ENCODE measurements at regions of chr12 and their contacts with region 1.

Region 1: DNA sequence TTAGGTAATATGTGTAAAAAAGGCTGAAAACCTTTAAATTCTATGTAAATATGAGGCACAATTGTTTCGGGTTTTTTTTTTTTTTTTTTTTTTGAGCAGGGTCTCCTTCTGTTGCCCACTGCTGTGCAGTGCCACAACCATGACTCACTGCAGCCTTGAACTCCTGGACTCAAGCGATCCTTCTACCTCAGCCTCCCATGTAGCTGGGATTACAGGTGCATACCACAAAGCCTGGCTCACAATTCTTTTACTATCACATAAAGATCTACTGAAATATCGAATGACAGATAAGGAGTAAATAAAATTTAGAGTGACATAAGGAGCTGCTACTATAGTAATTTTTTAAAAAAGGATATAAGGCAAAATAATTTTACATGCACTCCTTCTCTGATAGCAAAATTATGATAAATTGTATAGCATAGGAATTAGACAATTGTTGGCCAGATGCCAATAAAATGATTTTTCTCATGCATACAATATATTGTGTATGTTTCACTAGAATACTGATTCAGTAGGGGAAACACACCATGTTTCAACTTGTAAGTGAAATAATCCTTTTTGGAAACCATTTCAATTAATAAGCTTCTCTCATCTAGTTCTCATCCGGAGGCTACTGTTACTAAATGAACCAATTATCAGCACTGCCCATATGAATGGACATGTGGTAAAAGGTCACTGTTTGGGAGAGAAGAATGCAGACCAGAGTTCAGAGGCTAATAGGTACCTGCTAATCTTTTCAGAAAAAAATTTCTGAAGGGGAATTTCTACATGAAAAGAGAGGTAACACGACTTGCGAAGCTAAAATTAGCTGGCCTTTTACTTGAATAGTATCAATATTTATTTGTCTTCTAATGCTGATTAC is 108.4 kb downstream of the PPP1R12A start:
- DNase-seq: no peak
- ATAC-seq: no peak
- H3K4me3 ChIP-seq: no peak overlapping the region
- H3K4me3 Mint-ChIP-seq: no peak overlapping the region
- H3K27ac ChIP-seq: no peak overlapping the region
- H3K27ac Mint-ChIP-seq: no peak overlapping the region
- H3K4me1 ChIP-seq: no peaks in the 10 kb centered on the region
- H3K4me1 Mint-ChIP-seq: peaks cover 10% of the 10 kb centered on the region
- H3K27me3 ChIP-seq: no peaks in the 10 kb centered on the region
- H3K27me3 Mint-ChIP-seq: no peaks in the 10 kb centered on the region
- CTCF ChIP-seq: no peak

Region 2: DNA sequence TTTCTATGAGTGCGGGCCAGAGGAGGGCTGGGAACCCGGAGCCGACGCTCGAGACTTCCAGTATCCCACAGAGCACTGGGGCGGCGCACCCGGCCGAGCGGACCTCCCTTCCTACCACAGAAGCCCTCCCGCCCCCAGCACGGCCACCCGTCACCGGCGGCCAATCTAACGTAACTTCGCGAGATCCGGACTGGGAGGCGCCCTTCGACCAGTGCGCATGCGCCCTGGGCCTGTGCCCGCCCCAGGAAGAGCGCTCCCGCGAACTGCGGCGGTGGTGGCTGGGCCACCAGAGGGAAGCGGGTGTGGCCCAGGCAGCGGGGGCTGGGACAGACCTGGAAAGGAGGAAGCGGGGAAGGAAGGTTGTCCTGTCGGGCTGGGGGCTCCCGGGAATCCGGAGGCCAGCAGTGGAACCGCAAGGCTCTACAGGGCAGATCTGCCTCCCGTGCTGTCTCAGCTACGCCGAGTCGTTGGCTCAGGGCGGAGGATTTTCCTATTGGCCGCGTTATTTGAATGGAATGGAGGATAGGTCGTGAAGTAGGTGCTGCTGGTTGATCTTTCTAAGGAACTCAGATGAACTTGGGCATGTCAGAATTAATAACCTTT is 108.6 kb after region 1 on chr12 and contains the start of gene PPP1R12A:
- CTCF ChIA-PET with region 1: no interaction called
- POLR2A ChIA-PET with region 1: no interaction called
- intact Hi-C with region 1: loop called (anchors 10 kb)
- DNase-seq: peak; percentile 97
- ATAC-seq: peak; percentile 88
- H3K4me3 ChIP-seq: peak within 1 kb of the TSS; percentile 85 to 95 (median 92)
- H3K4me3 Mint-ChIP-seq: peak within 1 kb of the TSS; percentile 99
- H3K27ac ChIP-seq: peak within 1 kb of the TSS; percentile 92 to 93
- H3K27ac Mint-ChIP-seq: peak within 1 kb of the TSS; percentile 99
- H3K4me1 ChIP-seq: peaks cover 18 to 31% of the 10 kb centered on the region in 2 donors
- H3K4me1 Mint-ChIP-seq: peaks cover 43% of the 10 kb centered on the region
- H3K27me3 ChIP-seq: no peaks in the 10 kb centered on the region
- H3K27me3 Mint-ChIP-seq: no peaks in the 10 kb centered on the region
- CTCF ChIP-seq: no peak
- total RNA-seq, gene PPP1R12A: 110 and 139 TPM in 2 replicates

Measured in B cell (primary cell).